ENCODE measurements at regions of chr1 and their contacts with region 1.

Region 1: DNA sequence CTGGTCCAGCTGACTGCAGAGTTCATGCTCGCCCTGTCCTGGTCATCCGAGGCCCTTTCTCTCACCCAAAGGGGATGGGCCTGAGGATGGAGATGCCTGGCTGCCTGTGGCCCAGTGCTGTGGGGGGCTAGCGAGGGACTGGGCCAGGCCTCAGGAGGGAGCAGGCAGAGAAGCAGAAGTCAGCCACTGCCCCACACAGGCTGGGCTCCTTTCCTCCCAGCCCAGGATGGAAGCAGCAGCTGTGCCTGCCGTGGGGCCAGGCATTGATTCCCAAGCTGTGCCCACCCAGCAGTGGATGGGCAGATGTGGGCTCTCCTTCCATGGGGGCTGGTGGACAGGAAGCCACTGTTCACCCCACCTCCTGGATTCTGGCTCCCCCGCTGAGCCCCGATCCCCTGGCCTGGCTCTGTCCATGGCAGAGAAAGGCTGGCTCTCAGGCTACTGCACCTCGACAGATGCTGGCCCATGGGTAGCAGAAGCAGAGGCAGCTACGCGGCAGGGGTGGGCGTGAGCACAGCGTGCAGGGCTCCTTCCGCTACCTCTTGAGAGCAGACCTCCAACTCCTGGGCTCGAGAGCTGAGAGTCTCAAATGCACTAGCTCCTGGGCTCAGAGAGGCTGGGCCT is 24.6 kb downstream of the RUNX3 start:
- DNase-seq: no peak
- ATAC-seq: no peak
- H3K4me3 ChIP-seq: no peak overlapping the region
- H3K27ac ChIP-seq: no peak overlapping the region
- H3K4me1 ChIP-seq: no peaks in the 10 kb centered on the region
- H3K27me3 ChIP-seq: no peaks in the 10 kb centered on the region
- CTCF ChIP-seq: no peak

Region 2: GRCh38 chr1:24888971-24889676 is 16.3 kb before region 1 on chr1:
- CTCF ChIA-PET with region 1: no interaction called
- POLR2A ChIA-PET with region 1: no interaction called
- in situ Hi-C with region 1: no loop called
- intact Hi-C with region 1: no loop called
- DNase-seq: no peak
- ATAC-seq: no peak
- H3K4me3 ChIP-seq: no peak overlapping the region
- H3K27ac ChIP-seq: no peak overlapping the region
- H3K4me1 ChIP-seq: no peaks in the 10 kb centered on the region
- H3K27me3 ChIP-seq: peaks cover 3% of the 10 kb centered on the region; the same call in 1 of the 2 replicates
- CTCF ChIP-seq: no peak

Region 3: GRCh38 chr1:25065795-25066238 is 160.3 kb after region 1 on chr1:
- CTCF ChIA-PET with region 1: no interaction called
- POLR2A ChIA-PET with region 1: interaction called, 13 read pairs
- in situ Hi-C with region 1: no loop called
- intact Hi-C with region 1: no loop called
- DNase-seq: no peak
- ATAC-seq: no peak
- H3K4me3 ChIP-seq: no peak overlapping the region
- H3K27ac ChIP-seq: no peak overlapping the region
- H3K4me1 ChIP-seq: peaks cover 5% of the 10 kb centered on the region; the same call in 1 of the 2 replicates
- H3K27me3 ChIP-seq: no peaks in the 10 kb centered on the region
- CTCF ChIP-seq: no peak